SK-N-SH (cell line): ENCODE measurements at regions of chr11 and their contacts with region 1.

Region 1: GRCh38 chr11:8688414-8689362 is 6.1 kb downstream of the RPL27A start:
- DNase-seq: peak; percentile 95
- H3K4me3 ChIP-seq: peak overlapping the region; percentile 68
- H3K27ac ChIP-seq: peak overlapping the region; percentile 90 to 96
- H3K4me1 ChIP-seq: peaks cover 24 to 32% of the 10 kb centered on the region in 2 experiments; a peak in 3 of 4 replicates
- H3K27me3 ChIP-seq: no peaks in the 10 kb centered on the region
- CTCF ChIP-seq: peak; percentile 36
- EP300 ChIP-seq: peak in 1 of 2 experiments; percentile 40; a peak in 1 of 4 replicates
- RAD21 ChIP-seq: peak; percentile 50

Region 2: GRCh38 chr11:8709002-8709672 is 20.4 kb after region 1 on chr11:
- CTCF ChIA-PET with region 1: interaction called, 3 read pairs
- POLR2A ChIA-PET with region 1: interaction called, 10 read pairs
- DNase-seq: peak; percentile 87
- H3K4me3 ChIP-seq: no peak overlapping the region
- H3K27ac ChIP-seq: peak overlapping the region; percentile 67 to 90; a peak in 3 of 4 replicates
- H3K4me1 ChIP-seq: peaks cover 6 to 28% of the 10 kb centered on the region in 2 experiments; a peak in 2 of 4 replicates
- H3K27me3 ChIP-seq: no peaks in the 10 kb centered on the region
- CTCF ChIP-seq: no peak
- EP300 ChIP-seq: peak; percentile 37 to 41; a peak in 3 of 4 replicates
- RAD21 ChIP-seq: peak; percentile 24

Region 3: GRCh38 chr11:8870411-8871170 is 181.9 kb after region 1 on chr11:
- CTCF ChIA-PET with region 1: no interaction called
- POLR2A ChIA-PET with region 1: interaction called, 28 read pairs
- DNase-seq: peak; percentile 91
- H3K4me3 ChIP-seq: peak overlapping the region; percentile 73 to 85
- H3K27ac ChIP-seq: peak overlapping the region; percentile 94 to 97
- H3K4me1 ChIP-seq: peaks cover 7 to 26% of the 10 kb centered on the region in 2 experiments; a peak in 3 of 4 replicates
- H3K27me3 ChIP-seq: no peaks in the 10 kb centered on the region
- CTCF ChIP-seq: no peak
- EP300 ChIP-seq: no peak
- RAD21 ChIP-seq: peak; percentile 41